HepG2 (cell line): ENCODE measurements at regions of chr13 and their contacts with region 1.

Region 1: GRCh38 chr13:50123862-50124536 is 108.8 kb downstream of the KCNRG start:
- DNase-seq: peak; percentile 90
- ATAC-seq: peak; percentile 75
- H3K4me3 ChIP-seq: peak overlapping the region; percentile 67 to 95 (median 86)
- H3K27ac ChIP-seq: peak overlapping the region; percentile 98
- H3K4me1 ChIP-seq: peaks cover 34% of the 10 kb centered on the region
- H3K27me3 ChIP-seq: peaks cover 0 to 5% of the 10 kb centered on the region in 2 experiments; a peak in 1 of 5 replicates
- CTCF ChIP-seq: peak; percentile 40
- EP300 ChIP-seq: no peak
- POLR2A ChIP-seq: peak in 1 of 2 experiments; percentile 74; a peak in 2 of 4 replicates
- RAD21 ChIP-seq: peak; percentile 75

Region 2: DNA sequence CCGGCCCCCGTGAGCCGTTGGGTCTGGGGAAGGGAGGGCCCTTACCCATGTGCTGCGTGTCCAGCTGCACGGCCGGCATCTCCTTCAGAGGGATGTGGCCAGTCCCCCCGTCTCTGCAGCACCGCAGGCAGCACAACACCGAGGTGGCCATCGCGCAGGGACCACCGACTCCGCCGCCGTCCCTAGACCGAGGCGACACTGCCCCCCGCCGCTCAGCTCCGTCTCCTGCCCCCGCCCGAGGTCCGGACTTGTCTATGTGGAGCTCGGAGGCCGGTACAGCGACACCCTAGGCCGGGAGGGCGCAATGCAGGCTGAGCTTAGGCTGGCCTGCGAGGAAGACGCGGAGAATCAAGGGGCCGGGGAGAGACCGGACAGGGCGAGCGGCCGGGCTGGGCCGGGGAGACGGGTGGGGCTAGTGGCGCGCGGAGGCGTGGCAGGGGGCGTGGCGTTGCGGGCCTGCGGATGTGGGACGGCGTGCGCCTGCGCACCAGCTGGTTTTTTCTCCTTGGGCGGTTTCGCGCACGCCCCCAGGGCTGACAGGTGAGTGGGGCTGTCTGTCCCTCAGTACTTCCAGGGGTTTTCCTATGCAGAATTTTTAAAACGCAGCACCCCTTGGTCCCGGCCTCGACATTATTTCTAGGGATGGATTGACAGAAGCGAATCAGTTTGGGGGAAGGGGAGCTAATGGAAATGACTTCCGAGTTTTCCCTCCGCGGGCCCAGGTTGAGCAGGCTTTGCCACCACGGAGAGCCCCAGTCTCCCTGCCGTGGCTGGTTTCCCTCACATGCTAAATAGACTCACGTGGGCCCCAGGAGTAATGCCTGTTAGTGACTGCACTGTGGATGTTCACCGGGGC is 187.7 kb before region 1 on chr13 and contains the start of gene SPRYD7:
- CTCF ChIA-PET with region 1: no interaction called
- POLR2A ChIA-PET with region 1: no interaction called
- in situ Hi-C with region 1: no loop called
- intact Hi-C with region 1: loop called (anchors 1 kb)
- DNase-seq: peak; percentile 95
- ATAC-seq: peak; percentile 98
- H3K4me3 ChIP-seq: peak within 1 kb of the TSS; percentile 81 to 94 (median 88)
- H3K27ac ChIP-seq: peak within 1 kb of the TSS; percentile 74
- H3K4me1 ChIP-seq: peaks cover 41% of the 10 kb centered on the region
- H3K27me3 ChIP-seq: no peaks in the 10 kb centered on the region; a peak in 1 of 5 replicates
- CTCF ChIP-seq: peak; percentile 99
- EP300 ChIP-seq: peak in 1 of 2 experiments; percentile 46; a peak in 1 of 4 replicates
- POLR2A ChIP-seq: peak; percentile 49 to 88
- RAD21 ChIP-seq: peak; percentile 81
- total RNA-seq, gene SPRYD7: 5.9 and 6.8 TPM in 2 replicates

Region 3: DNA sequence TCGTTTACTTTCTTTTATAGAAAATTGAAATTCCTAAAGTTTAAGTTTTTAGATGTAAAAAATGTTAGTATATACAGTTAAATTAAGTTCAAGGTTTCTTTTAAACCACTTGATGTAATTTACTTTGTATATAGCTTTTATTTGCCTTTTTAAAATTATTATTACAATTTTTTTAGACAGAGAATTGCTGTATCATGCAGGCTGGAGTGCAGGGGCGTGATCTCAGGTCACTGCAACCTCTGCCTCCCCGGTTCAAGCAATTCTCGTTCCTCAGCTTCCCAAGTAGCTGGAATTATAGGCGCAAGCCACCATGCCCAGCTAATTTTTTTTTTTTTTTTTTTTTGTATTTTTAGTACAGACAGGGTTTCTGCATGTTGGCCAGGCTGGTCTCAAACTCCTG is 33.8 kb before region 1 on chr13:
- CTCF ChIA-PET with region 1: no interaction called
- POLR2A ChIA-PET with region 1: interaction called, 10 read pairs
- in situ Hi-C with region 1: no loop called
- intact Hi-C with region 1: no loop called
- DNase-seq: no peak
- ATAC-seq: no peak
- H3K4me3 ChIP-seq: no peak overlapping the region
- H3K27ac ChIP-seq: no peak overlapping the region
- H3K4me1 ChIP-seq: peaks cover 38% of the 10 kb centered on the region
- H3K27me3 ChIP-seq: no peaks in the 10 kb centered on the region
- CTCF ChIP-seq: no peak
- EP300 ChIP-seq: no peak
- POLR2A ChIP-seq: no peak
- RAD21 ChIP-seq: no peak

Region 4: GRCh38 chr13:50189450-50189849 is 65.5 kb after region 1 on chr13:
- CTCF ChIA-PET with region 1: no interaction called
- POLR2A ChIA-PET with region 1: interaction called, 21 read pairs
- in situ Hi-C with region 1: no loop called
- intact Hi-C with region 1: loop called (anchors 10 kb)
- DNase-seq: no peak
- ATAC-seq: no peak
- H3K4me3 ChIP-seq: no peak overlapping the region
- H3K27ac ChIP-seq: peak overlapping the region; percentile 0
- H3K4me1 ChIP-seq: peaks cover 58% of the 10 kb centered on the region
- H3K27me3 ChIP-seq: no peaks in the 10 kb centered on the region; a peak in 1 of 5 replicates
- CTCF ChIP-seq: no peak; the same call in 1 of the 2 replicates
- EP300 ChIP-seq: no peak
- POLR2A ChIP-seq: no peak
- RAD21 ChIP-seq: no peak

Region 5: DNA sequence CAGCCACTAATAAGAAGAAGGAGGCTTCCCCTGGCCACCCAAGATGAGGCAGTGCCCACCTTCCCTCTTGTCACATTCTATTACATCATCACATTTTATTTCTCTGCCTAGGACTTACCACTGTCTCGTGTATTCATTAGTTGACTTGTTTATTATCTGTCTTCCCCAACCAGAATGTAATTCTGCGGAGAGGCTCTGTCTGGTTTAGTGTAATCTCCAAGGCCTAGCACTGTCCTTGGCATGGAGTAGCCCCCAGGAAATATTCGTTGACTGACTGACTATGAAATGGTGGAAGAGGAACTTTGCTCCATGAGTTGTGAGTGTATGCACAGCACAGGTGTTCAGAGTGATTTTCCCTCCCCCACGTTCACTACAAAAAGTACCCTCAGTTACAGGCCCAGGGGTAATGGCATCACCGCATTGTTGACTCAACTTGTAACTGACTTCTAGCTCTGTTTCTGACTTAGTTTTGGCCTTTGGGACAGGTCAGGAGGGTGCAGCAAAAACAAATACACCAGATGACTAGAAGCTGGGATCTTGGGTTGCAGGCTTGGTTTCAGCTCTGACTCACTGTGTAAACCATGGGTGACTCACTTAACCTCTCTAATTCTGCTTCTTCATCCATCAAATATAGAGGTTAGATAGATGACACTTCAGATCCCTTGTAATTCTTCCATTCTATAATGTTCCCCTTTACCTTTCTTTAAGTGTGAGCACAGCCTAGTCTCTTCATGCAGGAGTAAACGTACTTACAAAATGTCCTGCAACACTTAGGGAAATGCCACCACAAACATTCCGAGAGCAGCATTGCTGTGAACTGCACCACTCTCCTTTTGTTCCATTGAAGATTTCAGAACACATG is 120.9 kb after region 1 on chr13:
- CTCF ChIA-PET with region 1: no interaction called
- POLR2A ChIA-PET with region 1: interaction called, 23 read pairs
- in situ Hi-C with region 1: no loop called
- intact Hi-C with region 1: loop called (anchors 2 kb)
- DNase-seq: peak; percentile 99
- ATAC-seq: peak; percentile 95
- H3K4me3 ChIP-seq: peak overlapping the region in 2 of 3 experiments; percentile 17 to 42; a peak in 1 of 6 replicates
- H3K27ac ChIP-seq: peak overlapping the region; percentile 98
- H3K4me1 ChIP-seq: peaks cover 90% of the 10 kb centered on the region
- H3K27me3 ChIP-seq: no peaks in the 10 kb centered on the region
- CTCF ChIP-seq: 0 out of 2 replicates have a peak, but pooled peaks have one; percentile 22
- EP300 ChIP-seq: peak; percentile 72 to 95; a peak in 3 of 4 replicates
- POLR2A ChIP-seq: peak in 1 of 2 experiments; percentile 58; a peak in 1 of 4 replicates
- RAD21 ChIP-seq: peak; percentile 52; the same call in 1 of the 2 replicates